Head of caudate nucleus (tissue), 42 donors: ENCODE measurements at regions of chr1 and their contacts with region 1.

Region 1: DNA sequence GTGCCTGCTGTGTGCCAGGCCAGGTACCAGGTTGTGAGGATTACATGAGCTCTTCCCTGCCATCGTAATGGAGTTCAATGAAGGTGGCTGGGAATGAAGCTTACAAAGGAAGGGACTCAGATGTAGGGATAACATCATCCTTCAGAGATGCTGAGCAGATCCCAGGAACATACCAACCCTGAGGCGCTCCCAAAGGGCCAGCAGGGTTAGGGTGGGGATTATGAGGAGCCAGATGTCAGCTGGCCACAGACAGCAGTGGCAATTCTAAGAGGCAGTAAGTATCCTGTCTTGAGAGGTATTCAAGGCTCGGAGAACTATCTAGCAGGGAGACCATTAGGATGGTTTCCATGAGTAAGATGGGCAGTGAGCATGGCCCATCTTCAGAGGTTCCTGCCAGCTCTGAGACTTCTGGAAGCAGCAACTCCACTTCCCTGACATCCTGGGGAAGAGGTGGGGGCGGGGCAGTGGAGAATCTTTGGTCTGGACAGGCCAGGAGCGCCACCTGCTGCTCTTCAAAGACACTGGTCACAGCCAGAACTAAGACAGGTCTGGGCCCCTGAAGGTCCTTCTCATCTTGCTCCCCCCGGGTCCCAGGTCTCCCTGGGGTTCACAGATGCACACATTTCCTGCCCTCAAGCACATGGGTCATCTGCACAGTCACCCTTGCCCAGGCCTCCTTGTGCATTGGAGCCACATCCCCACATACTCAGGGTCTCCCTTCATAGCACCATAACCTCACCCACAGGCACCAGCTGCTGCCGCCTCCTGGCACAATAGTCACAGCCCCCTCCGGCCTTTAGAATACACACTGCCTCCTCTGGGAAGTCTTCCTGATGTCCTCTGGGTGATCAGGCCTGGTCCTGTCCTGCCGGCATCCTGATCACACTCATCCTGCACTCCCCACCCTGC is 2.7 kb upstream of the SDC3 start:
- DNase-seq: peak; percentile 82 to 95 (median 88)

Region 2: DNA sequence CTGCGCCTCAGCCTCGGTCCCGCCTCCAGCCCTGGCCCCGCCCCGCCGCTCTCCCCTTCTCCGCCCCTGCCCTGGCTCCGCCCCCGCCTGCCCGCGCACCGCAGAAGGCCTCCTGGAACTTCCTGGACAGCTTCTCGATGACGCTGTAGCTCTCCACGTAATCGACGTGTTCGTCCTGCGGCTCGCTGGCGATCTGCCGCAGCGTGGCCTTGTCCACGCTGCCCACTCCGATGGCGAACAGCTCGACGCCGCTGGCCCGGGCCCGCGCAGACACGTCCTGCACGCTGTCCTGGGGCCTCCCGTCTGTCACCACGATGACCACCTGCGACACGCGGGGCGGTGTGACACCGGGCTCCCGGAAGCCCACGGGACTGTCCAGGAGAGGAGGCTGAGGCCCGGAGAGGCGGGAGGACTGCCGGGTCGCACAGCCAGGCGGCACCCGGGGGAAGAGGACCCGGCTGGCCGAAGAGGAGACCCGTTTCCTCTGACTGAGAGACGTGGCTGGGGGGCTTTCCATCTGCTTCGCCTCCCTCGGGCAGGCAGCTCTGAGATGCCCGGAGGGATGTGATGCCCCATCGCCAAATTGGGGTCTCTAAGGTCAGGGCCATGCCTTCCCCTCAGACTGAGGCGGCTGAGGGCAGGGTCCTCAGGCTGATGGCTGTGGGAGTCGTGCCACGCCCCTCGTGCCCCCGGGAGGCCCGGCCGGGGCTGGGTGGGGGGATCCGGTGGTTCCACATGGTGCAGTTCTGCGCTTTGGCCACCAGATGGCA is 192.5 kb before region 1 on chr1:
- intact Hi-C with region 1: loop called (anchors 2 kb)
- DNase-seq: peak in 36 of 42 donors; percentile 53 to 95 (median 90)

Region 3: DNA sequence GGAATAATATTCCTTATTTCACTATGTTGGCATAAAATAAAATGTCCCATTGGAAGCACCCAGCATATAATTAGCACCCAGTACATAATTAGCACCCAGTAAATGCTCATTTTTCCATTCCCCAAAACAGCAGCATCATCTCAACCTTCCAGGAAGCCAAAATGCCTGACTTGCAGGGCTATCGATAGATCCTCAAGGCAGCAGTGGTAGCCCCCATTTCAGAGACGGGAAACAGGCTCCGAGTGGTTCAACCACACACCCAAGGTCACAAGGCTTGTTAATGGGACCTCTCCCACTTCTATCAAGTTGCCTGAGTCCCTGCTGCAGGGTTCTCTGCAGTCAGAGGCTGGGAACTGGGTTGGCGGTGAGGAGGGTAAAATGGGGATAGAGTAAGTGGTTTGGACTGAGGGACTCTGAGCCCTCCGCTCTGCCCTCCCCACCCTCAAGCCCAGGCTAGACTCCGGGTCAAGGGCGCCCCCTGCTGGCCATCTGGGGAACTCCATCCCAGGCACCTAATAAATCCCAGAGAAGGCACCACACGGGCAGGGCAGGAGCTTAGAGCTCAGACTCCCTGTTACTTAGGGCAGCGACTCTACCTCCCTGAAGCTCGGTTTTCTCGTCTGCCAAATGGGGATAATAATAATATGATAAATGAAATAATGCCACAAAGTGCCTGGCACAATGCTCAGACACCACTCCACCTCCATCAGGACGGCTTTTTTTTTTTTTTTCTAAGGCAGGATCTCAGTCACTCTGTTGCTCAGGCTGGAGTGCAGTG is 131.8 kb before region 1 on chr1:
- intact Hi-C with region 1: loop called (anchors 5 kb)
- DNase-seq: peak; percentile 63 to 97 (median 91)

Region 4: DNA sequence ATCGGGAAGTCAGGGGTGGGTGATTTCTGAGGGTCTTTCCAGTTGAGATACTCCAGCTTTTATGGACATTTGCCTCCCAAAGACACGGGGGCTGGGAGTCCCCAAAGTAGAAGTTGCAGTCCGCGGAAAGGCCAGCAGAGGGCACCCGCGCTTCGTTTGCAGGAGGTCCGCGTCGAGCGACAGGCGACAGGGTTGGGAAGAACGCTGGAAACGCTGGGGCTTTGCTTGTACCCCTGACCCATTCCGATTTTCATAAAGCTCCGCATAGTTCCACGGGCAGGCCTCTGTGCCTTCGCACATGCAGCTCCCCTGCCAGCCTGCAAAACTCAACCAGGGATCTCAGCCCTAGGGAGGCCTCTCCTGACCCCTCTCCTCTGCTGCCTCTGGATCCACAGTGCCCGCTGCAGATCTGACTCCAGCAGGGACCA is 109.5 kb before region 1 on chr1:
- intact Hi-C with region 1: loop called (anchors 1 kb)
- DNase-seq: peak; percentile 76 to 98 (median 92)

Region 5: DNA sequence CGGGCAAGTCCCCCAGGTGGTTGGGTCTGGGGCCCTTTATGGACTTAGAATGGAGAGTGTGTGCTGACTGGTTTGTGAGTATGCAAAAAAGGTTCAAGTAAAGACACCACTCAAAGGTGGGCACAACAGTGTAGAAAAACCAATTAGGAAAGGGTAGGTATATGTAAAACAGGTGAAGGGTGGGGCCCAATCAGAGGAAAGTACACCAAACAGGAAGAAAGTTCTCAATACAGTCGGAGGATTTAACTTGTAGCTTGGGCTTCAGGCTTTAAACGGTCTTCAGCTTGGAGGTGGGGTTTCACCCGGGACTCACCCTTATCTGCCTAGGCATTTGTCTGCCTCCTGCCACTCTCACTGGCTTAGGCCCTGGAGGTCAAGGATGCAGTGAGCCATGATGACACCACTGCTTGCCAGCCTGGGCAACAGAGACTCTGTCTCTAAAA is 161.0 kb after region 1 on chr1:
- intact Hi-C with region 1: no loop called
- DNase-seq: no peak

Region 6: DNA sequence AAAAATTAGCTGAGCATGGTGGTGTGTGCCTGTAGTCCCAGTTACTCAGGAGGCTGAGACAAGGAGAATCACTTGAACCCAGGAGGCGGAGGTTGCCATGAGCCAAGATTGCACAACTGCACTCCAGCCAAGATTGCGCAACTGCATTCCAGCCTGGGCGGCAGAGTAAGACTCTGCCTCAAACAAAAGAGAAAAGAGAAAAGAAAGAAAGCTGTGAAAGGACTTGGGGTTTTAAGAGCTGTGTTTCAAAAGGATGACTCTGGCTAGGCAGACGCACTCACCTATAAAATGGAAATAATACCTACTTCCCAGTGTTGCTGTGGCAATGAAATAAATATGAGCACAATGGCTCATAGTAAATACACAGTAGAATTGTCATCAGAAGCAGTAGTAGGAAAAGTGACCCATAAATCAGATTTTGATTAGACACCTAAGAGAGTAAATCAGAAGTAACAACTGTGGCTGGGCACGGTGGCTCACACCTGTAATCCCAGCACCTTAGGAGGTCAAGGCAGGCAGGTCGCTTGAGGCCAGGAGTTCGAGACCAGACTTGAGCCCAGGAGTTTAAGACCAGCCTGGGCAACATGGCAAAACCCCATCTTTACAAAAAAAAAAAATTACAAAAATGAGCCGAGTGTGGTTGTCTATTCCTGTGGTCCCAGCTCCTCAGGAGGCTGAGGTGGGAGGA is 200.1 kb after region 1 on chr1:
- intact Hi-C with region 1: no loop called
- DNase-seq: peak in 6 of 42 donors; percentile 12 to 54 (median 16)